ENCODE measurements at regions of chr20 and their contacts with region 1.

Region 1: GRCh38 chr20:815914-816606 is 17.5 kb upstream of the FAM110A start:
- DNase-seq: peak; percentile 86

Region 2: GRCh38 chr20:688809-689212 is 127.2 kb before region 1 on chr20:
- intact Hi-C with region 1: no loop called
- DNase-seq: peak; percentile 37

Region 3: GRCh38 chr20:833450-834150 is 17.5 kb after region 1 on chr20 and contains the start of gene FAM110A:
- intact Hi-C with region 1: no loop called
- DNase-seq: peak; percentile 99
- total RNA-seq, gene FAM110A: 2.7 to 4.0 TPM

Region 4: GRCh38 chr20:868279-868678 is 52.2 kb after region 1 on chr20:
- intact Hi-C with region 1: no loop called
- DNase-seq: peak; percentile 24

Region 5: GRCh38 chr20:916125-916799 is 100.2 kb after region 1 on chr20 and contains the start of gene ANGPT4:
- intact Hi-C with region 1: no loop called
- DNase-seq: peak; percentile 62
- total RNA-seq, gene ANGPT4: 0.24 to 1.1 TPM

Region 6: GRCh38 chr20:956330-956951 is 140.4 kb after region 1 on chr20:
- intact Hi-C with region 1: loop called (anchors 5 to 10 kb)
- DNase-seq: peak; percentile 89

Region 7: DNA sequence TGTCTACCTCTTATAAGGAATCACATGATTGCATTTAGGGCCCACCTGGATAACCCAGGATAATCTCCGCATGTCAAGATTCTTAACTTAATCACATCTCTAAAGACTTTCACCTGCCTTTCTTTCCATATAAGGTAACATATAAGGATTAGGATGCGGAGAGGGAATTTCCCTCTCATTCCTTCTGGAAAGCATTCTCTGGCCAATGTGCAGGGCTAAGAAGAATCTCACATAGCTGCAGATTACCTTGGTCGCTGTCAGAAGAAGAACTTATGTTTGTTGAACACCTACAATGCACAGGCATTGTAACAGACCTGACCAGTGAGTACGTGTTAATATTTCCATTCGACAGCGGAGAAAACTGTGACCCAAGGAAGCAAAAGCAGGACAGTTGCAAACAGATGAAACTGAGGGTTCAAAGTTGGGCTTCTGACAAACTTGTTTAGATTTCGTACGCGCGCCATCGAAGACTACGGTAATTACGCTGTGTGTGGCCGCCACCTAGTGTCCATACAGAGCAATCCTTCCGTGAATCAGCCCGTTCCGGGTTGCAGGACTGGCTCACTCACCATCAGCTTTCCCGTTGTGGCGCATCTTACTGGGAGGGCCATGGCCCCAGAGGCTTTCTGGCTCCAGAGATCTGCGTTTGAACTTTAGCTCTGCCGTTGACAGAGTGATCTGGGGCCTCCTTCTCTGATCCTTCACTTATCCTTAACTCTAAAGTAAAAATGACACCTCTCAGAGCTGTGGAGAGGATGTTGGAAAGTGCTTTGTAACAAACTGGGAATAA is 396.7 kb after region 1 on chr20:
- intact Hi-C with region 1: loop called in 1 of 2 experiments (anchors 5 kb)
- DNase-seq: peak; percentile 86

Measured in posterior vena cava (tissue), 2 donors.